ENCODE measurements at regions of chr16 and their contacts with region 1.

Region 1: GRCh38 chr16:49513040-49513439 is 139.4 kb downstream of the C16orf78 start:
- DNase-seq: no peak
- ATAC-seq: peak in 4 of 8 donors; percentile 27 to 49 (median 40)
- H3K4me3 ChIP-seq: no peak overlapping the region
- H3K27ac ChIP-seq: no peak overlapping the region
- H3K4me1 ChIP-seq: no peaks in the 10 kb centered on the region
- H3K27me3 ChIP-seq: no peaks in the 10 kb centered on the region
- CTCF ChIP-seq: peak in 3 of 9 donors; percentile 7 to 32 (median 17)

Region 2: GRCh38 chr16:49452578-49452977 is 60.5 kb before region 1 on chr16:
- intact Hi-C with region 1: loop called in 1 of 10 experiments (anchors 10 kb)
- DNase-seq: no peak
- ATAC-seq: peak in 6 of 8 donors; percentile 55 to 84 (median 76)
- H3K4me3 ChIP-seq: peak overlapping the region in 6 of 10 donors; percentile 13 to 42 (median 33)
- H3K27ac ChIP-seq: peak overlapping the region; percentile 30 to 91 (median 73)
- H3K4me1 ChIP-seq: peaks cover 0 to 21% (median 3%) of the 10 kb centered on the region in 9 donors
- H3K27me3 ChIP-seq: peaks cover 0 to 20% (median 0%) of the 10 kb centered on the region in 7 donors
- CTCF ChIP-seq: peak in 2 of 9 donors; percentile 13 to 26

Region 3: DNA sequence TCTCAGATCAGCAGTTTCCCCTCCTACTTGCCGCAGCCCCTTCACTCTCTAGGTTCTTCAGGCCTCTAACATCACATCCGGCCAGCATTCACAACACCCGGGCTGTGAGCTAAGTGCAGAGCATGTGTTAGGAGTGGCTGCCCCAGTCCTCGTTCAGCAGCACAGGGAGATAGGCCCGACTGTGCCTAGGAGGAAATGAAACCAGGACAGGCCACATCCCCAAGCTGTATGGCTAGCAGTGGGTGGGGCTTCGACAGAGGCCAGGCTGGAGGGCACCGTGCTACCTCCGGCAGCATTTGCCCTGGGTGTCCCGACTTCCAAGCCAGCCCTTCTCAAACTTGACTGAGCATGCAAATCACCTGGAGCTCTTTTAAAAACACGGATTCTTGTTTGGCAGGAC is 62.4 kb after region 1 on chr16:
- intact Hi-C with region 1: no loop called
- DNase-seq: peak in 1 of 2 donors; percentile 21
- ATAC-seq: peak; percentile 34 to 85 (median 78)
- H3K4me3 ChIP-seq: no peak overlapping the region
- H3K27ac ChIP-seq: peak overlapping the region in 1 of 10 donors; percentile 24
- H3K4me1 ChIP-seq: peaks cover 0 to 19% (median 9%) of the 10 kb centered on the region in 9 donors
- H3K27me3 ChIP-seq: no peaks in the 10 kb centered on the region
- CTCF ChIP-seq: no peak

Region 4: GRCh38 chr16:49755313-49755620 is 242.2 kb after region 1 on chr16:
- intact Hi-C with region 1: loop called in 1 of 10 experiments (anchors 10 kb)
- DNase-seq: peak in 1 of 2 donors; percentile 30
- ATAC-seq: peak; percentile 51 to 89 (median 77)
- H3K4me3 ChIP-seq: peak overlapping the region in 9 of 10 donors; percentile 30 to 56 (median 44)
- H3K27ac ChIP-seq: peak overlapping the region; percentile 43 to 90 (median 84)
- H3K4me1 ChIP-seq: peaks cover 2 to 51% (median 40%) of the 10 kb centered on the region in 9 donors
- H3K27me3 ChIP-seq: peaks cover 0 to 13% (median 0%) of the 10 kb centered on the region in 7 donors
- CTCF ChIP-seq: peak; percentile 20 to 74 (median 51)